Panc1 (cell line): ENCODE measurements at regions of chr6 and their contacts with region 1.

Region 1: GRCh38 chr6:128617285-128617684 is 96.9 kb upstream of the PTPRK start:
- DNase-seq: no peak
- ATAC-seq: no peak
- H3K4me3 ChIP-seq: no peak overlapping the region
- H3K27ac ChIP-seq: no peak overlapping the region
- H3K4me1 ChIP-seq: no peaks in the 10 kb centered on the region
- H3K27me3 ChIP-seq: no peaks in the 10 kb centered on the region
- CTCF ChIP-seq: no peak

Region 2: GRCh38 chr6:127938701-127939100 is 678.6 kb before region 1 on chr6:
- CTCF ChIA-PET with region 1: no interaction called
- POLR2A ChIA-PET with region 1: no interaction called
- in situ Hi-C with region 1: no loop called
- intact Hi-C with region 1: no loop called
- DNase-seq: no peak
- ATAC-seq: no peak
- H3K4me3 ChIP-seq: no peak overlapping the region
- H3K27ac ChIP-seq: no peak overlapping the region
- H3K4me1 ChIP-seq: no peaks in the 10 kb centered on the region
- H3K27me3 ChIP-seq: no peaks in the 10 kb centered on the region
- CTCF ChIP-seq: no peak

Region 3: DNA sequence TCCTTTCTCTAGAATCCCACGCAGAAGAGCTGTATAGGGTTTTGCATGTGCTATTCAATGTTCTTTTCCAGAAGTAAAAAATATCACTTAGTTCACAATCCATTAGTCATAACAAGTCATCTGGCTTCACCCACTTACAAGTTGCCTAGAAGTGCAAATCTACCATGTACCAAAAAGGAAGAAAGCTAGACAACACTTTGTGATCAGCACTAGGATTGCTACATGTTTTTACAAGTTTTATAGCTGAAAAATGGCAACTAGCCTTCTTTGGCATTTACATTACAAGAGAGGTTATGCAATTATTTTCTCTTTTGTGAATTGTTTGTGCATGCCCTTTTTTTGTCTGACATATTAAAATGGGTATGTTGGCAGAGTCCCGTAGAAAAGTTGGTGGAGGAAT is 11.3 kb before region 1 on chr6:
- CTCF ChIA-PET with region 1: no interaction called
- POLR2A ChIA-PET with region 1: interaction called, 12 read pairs
- in situ Hi-C with region 1: no loop called
- intact Hi-C with region 1: no loop called
- DNase-seq: no peak
- ATAC-seq: no peak
- H3K4me3 ChIP-seq: no peak overlapping the region
- H3K27ac ChIP-seq: no peak overlapping the region
- H3K4me1 ChIP-seq: no peaks in the 10 kb centered on the region
- H3K27me3 ChIP-seq: no peaks in the 10 kb centered on the region
- CTCF ChIP-seq: no peak

Region 4: DNA sequence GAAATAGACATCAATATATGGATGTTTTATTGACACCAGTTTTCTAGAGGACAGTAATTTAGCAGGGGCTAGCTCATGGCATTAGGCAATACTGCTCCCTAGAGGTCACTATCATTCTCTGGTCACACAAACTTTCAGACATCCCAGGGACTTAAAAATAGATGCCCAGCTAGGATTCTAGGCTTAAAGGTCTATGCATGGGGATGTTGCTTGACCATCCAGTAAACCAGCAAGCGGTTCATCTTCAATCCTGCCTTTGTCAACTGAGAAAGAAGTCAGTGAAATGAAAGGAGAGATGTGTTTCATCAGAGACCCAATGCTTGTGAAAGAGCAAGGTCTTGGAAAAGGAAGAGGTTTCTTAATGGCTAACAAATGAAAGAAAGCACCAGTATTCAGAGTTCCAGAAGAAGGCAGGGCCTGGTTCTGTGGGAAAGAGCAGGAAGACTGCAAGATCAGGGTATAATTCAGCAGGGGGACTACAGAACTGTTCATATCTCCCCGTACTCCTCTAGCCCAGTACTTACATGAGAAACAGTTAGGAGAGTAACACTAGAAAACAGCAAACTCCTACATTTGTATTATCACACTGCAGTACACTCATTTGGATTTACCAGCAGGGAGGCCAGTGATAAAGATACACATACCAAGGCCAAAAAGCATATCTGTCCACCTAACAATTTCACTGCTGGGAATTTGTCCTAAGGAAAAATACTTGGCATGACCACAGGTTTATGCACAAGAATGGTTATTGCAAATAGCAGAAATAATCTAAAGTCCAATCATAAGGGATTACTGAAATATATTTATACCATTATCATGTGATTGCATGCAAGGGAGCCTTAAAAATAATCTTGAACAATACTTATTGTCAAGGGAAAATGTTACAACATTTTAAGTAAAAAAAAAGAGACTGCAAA is 114.2 kb after region 1 on chr6:
- CTCF ChIA-PET with region 1: no interaction called
- POLR2A ChIA-PET with region 1: no interaction called
- in situ Hi-C with region 1: no loop called
- intact Hi-C with region 1: no loop called
- DNase-seq: peak; percentile 20
- ATAC-seq: peak; percentile 79
- H3K4me3 ChIP-seq: no peak overlapping the region
- H3K27ac ChIP-seq: no peak overlapping the region
- H3K4me1 ChIP-seq: no peaks in the 10 kb centered on the region
- H3K27me3 ChIP-seq: no peaks in the 10 kb centered on the region
- CTCF ChIP-seq: peak; percentile 80